Heart left ventricle (tissue), 16 donors: ENCODE measurements at regions of chr17 and their contacts with region 1.

Region 1: GRCh38 chr17:4366327-4367063 is at the start of gene UBE2G1:
- DNase-seq: peak; percentile 98 to 100 (median 99)
- ATAC-seq: peak; percentile 81 to 94 (median 92)
- H3K4me3 ChIP-seq: peak within 1 kb of the TSS; percentile 78 to 100 (median 99)
- H3K27ac ChIP-seq: peak within 1 kb of the TSS; percentile 94 to 100 (median 98)
- H3K4me1 ChIP-seq: peaks cover 0 to 36% (median 25%) of the 10 kb centered on the region in 12 donors
- H3K27me3 ChIP-seq: no peaks in the 10 kb centered on the region
- CTCF ChIP-seq: peak in 7 of 12 donors; percentile 8 to 42 (median 27)
- POLR2A ChIP-seq: peak; percentile 82 to 96
- total RNA-seq, gene UBE2G1: 79.4 to 125 (median 96.2) TPM

Region 2: DNA sequence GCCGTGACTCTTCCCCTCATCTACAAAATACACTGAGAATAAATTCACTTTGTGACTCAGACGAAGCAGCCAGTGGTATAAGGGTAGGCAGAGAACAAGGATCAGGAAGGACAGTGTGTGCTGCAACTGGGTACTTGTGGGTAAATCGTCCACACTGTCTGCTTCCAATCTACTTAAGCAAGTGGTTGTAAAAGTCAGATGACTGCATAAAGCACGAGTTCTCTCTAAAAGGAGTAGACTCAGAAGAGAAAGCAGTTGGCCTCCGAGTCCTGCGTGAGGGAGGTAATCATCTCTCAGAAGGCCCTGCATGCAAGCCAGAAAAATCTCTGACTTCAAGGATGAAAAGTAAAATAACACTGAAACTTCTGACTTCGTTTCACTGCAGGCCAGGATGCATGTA is 145.8 kb before region 1 on chr17:
- intact Hi-C with region 1: loop called in 5 of 10 experiments (anchors 2 to 5 kb)
- DNase-seq: no peak
- ATAC-seq: peak; percentile 64 to 78 (median 68)
- H3K4me3 ChIP-seq: peak overlapping the region in 1 of 12 donors; percentile 3
- H3K27ac ChIP-seq: peak overlapping the region in 11 of 12 donors; percentile 14 to 89 (median 61)
- H3K4me1 ChIP-seq: peaks cover 0 to 24% (median 9%) of the 10 kb centered on the region in 12 donors
- H3K27me3 ChIP-seq: no peaks in the 10 kb centered on the region
- CTCF ChIP-seq: no peak
- POLR2A ChIP-seq: no peak

Region 3: DNA sequence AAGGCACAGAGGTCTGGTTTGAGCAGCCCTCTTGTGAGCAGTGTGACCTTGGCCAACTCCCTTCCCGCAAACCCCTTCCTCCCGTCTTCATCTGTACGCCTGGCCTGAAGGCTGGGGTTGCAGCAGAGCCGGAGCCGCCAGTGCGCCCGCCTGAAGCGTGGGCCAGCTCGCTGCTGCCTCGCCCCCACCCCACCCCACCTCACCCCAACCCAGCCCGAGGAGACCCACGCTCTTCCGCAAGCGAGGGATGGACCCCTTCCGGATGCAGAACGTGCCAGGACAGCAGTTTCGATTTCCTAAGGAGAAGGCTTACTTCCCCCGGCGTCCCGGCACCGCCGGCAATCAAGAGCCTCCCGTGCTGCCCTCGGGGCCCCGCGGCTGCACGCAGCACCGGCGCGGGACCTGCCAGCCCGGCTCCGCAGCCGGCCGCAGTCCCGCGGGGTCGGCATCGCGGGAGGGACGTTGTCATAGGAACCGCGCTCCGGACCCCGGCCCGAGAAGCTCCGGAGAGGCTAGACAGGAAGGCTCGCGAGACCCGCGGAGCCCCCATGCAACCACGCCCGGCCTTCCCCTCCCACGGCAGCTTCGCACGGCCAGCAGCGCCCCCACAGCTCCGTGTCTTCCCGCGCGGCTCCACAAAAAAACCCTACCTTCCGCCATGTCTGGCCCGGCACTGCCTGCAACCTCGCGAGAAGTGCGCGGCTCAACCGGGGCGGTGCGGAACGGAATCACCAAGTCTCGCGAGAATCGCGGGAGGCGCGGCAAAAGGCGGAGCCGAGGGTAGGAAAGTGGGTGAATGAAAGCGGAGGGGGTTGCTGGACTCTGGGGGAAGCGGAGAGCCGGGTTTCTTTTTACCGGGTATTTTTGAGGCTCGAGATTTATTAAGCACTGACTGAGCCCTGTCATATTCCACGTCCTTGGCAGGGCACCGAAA is 102.9 kb before region 1 on chr17 and contains the start of gene ANKFY1:
- intact Hi-C with region 1: loop called in 2 of 10 experiments (anchors 5 to 10 kb)
- DNase-seq: peak; percentile 97 to 99 (median 97)
- ATAC-seq: peak; percentile 93 to 98 (median 96)
- H3K4me3 ChIP-seq: peak within 1 kb of the TSS; percentile 83 to 99 (median 97)
- H3K27ac ChIP-seq: peak within 1 kb of the TSS; percentile 74 to 95 (median 90)
- H3K4me1 ChIP-seq: peaks cover 0 to 34% (median 19%) of the 10 kb centered on the region in 12 donors
- H3K27me3 ChIP-seq: no peaks in the 10 kb centered on the region
- CTCF ChIP-seq: peak in 5 of 12 donors; percentile 15 to 38 (median 34)
- POLR2A ChIP-seq: peak in 1 of 2 donors; percentile 87
- total RNA-seq, gene ANKFY1: 20.6 to 44.9 (median 24.9) TPM

Region 4: GRCh38 chr17:4304417-4305027 is 62.0 kb before region 1 on chr17:
- intact Hi-C with region 1: loop called in 1 of 10 experiments (anchors 10 kb)
- DNase-seq: peak in 3 of 5 donors; percentile 21 to 33 (median 32)
- ATAC-seq: peak in 2 of 4 donors; percentile 54 to 70
- H3K4me3 ChIP-seq: no peak overlapping the region
- H3K27ac ChIP-seq: no peak overlapping the region
- H3K4me1 ChIP-seq: peaks cover 0 to 35% (median 13%) of the 10 kb centered on the region in 12 donors
- H3K27me3 ChIP-seq: no peaks in the 10 kb centered on the region
- CTCF ChIP-seq: peak; percentile 53 to 89 (median 75)
- POLR2A ChIP-seq: no peak

Region 5: DNA sequence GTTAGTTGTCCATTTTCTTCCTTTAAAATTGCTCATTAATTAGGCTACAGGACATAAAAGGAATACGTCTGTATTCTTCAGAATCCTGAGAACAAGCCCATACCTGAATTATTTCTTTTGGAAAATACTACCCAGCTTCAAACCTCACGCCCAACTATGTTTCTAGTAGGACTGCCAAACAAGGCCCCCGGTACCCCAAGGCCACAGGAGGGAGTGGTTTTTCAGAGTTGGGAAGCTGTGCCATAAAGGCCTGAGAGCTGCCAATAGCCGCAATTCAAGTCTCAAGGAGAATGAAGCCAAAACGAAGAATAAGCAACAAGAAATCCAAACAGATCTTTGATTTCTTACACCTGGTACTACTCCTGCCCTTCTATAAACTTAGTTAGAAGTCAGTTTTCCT is 48.3 kb before region 1 on chr17:
- intact Hi-C with region 1: loop called in 7 of 10 experiments (anchors 5 to 10 kb)
- DNase-seq: no peak
- ATAC-seq: no peak
- H3K4me3 ChIP-seq: no peak overlapping the region
- H3K27ac ChIP-seq: peak overlapping the region in 7 of 12 donors; percentile 0 to 49 (median 16)
- H3K4me1 ChIP-seq: peaks cover 7 to 64% (median 43%) of the 10 kb centered on the region in 12 donors
- H3K27me3 ChIP-seq: no peaks in the 10 kb centered on the region
- CTCF ChIP-seq: no peak
- POLR2A ChIP-seq: no peak

Region 6: DNA sequence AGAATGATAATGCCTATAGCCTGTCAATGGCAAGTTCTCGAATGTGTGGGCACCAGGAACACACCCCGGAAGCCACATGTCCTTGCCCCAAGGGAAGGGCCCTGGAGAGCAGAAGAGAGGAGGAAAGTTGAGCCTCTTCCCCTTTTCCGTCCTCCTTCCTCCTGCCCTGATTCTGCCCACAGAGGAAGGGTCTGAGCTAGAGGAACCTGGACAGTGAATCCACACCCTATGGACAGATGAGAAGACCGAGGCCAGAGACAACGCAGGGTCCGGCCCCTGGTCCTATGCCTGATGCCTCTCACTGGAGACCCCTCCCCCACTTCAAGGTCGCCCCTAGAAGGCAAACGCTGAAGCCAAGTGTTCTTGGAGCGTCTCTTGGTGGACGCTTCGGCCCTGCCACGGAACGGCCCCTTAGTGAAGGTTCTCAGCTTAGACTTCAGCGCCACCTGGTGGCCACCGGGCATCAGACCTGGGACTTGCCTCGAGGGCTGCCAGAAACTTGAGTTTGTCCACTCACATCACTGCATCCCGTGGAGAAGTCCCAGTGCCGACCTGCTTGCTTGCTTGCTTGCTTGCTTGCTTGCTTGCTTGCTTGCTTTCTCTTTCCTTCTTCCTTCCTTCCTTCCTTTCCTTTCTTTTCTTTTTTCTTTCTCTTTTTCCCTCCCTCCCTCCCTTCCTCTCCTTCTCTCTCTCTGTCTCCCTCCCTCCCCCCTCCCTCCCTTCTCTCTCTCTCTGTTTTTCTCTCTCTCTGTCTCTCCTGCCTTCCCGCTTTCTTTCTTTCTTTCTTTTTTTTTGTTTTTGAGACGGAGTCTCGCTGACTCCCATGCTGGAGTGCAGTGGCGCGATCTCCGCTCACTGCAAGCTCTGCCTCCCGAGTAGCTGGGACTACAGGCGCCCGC is 46.7 kb after region 1 on chr17:
- intact Hi-C with region 1: loop called in 1 of 10 experiments (anchors 5 kb)
- DNase-seq: peak; percentile 90 to 95 (median 92)
- ATAC-seq: peak; percentile 93 to 98 (median 98)
- H3K4me3 ChIP-seq: peak overlapping the region in 1 of 12 donors; percentile 23
- H3K27ac ChIP-seq: no peak overlapping the region
- H3K4me1 ChIP-seq: peaks cover 0 to 8% (median 0%) of the 10 kb centered on the region in 12 donors
- H3K27me3 ChIP-seq: no peaks in the 10 kb centered on the region
- CTCF ChIP-seq: peak; percentile 83 to 96 (median 88)
- POLR2A ChIP-seq: no peak